Naive thymus-derived CD4-positive, alpha-beta T cell (primary cell): ENCODE measurements at regions of chr4 and their contacts with region 1.

Region 1: DNA sequence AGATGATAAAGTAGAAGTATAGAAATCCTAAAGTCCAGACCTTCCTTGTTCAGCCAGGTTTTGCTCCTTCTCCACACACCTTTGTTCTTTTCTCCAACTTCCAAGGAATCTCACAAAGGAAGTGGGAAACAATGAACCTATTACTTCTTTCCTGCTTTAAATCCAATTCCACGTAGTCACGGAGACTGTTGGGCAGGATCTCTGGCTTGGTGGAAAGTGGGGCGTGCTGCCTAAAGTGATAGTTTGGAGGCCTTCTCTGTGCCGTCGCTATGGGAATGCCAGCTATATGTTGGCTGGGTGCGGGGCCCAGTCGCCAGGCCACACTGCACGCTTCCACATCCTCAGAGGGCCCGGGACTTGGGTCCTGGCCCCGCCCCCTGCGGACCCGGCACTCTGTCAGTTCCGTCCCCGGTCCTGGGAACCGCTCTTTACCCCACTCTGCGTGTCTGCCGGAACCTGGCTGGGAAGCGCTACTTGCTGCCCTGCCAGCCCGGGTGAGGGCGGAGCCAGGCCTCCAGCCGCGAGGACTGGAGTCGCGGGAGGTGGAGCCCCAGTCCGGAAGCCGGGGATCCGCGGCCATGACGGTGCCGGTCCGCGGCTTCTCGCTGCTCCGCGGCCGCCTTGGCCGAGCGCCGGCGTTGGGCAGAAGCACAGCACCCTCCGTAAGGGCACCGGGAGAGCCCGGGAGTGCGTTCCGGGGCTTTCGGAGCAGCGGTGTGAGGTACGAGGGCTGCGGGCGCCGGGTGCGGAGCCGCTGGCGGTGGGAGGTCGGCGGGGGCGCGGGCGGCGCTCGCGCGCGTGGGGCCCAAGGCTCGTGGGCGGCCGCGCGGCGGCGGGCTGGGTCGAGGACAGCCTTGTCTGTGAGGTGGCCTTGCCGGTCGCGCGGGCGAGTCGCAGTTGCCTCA is at the start of gene MTHFD2L:
- DNase-seq: peak; percentile 68 to 88 (median 75)
- ATAC-seq: peak; percentile 97
- H3K4me3 ChIP-seq: peak within 1 kb of the TSS; percentile 68
- H3K4me3 Mint-ChIP-seq: peak within 1 kb of the TSS; percentile 86 to 95 (median 90)
- H3K27ac ChIP-seq: peak within 1 kb of the TSS; percentile 78
- H3K27ac Mint-ChIP-seq: peak within 1 kb of the TSS; percentile 62 to 96 (median 90)
- H3K4me1 ChIP-seq: peaks cover 6 to 9% of the 10 kb centered on the region in 2 donors
- H3K4me1 Mint-ChIP-seq: peaks cover 10 to 48% (median 26%) of the 10 kb centered on the region in 7 donors
- H3K27me3 ChIP-seq: no peaks in the 10 kb centered on the region
- H3K27me3 Mint-ChIP-seq: peaks cover 0 to 30% (median 0%) of the 10 kb centered on the region in 5 donors
- total RNA-seq, gene MTHFD2L: 7.5 to 13.7 (median 10.4) TPM

Region 2: GRCh38 chr4:73069338-73070073 is 1088.3 kb before region 1 on chr4 and contains the start of gene COX18:
- CTCF ChIA-PET with region 1: no interaction called
- POLR2A ChIA-PET with region 1: no interaction called
- intact Hi-C with region 1: loop called (anchors 1 to 5 kb)
- DNase-seq: peak; percentile 90 to 93 (median 91)
- ATAC-seq: peak; percentile 87
- H3K4me3 ChIP-seq: peak within 1 kb of the TSS; percentile 79
- H3K4me3 Mint-ChIP-seq: peak within 1 kb of the TSS; percentile 86 to 97 (median 90)
- H3K27ac ChIP-seq: peak within 1 kb of the TSS; percentile 98
- H3K27ac Mint-ChIP-seq: peak within 1 kb of the TSS; percentile 93 to 99 (median 98)
- H3K4me1 ChIP-seq: peaks cover 25 to 29% of the 10 kb centered on the region in 2 donors
- H3K4me1 Mint-ChIP-seq: peaks cover 24 to 46% (median 39%) of the 10 kb centered on the region in 7 donors
- H3K27me3 ChIP-seq: no peaks in the 10 kb centered on the region
- H3K27me3 Mint-ChIP-seq: no peaks in the 10 kb centered on the region
- total RNA-seq, gene COX18: 11.1 to 18.4 (median 14.0) TPM

Region 3: GRCh38 chr4:74397748-74398426 is 240.1 kb after region 1 on chr4:
- CTCF ChIA-PET with region 1: no interaction called
- POLR2A ChIA-PET with region 1: interaction called, 5 read pairs
- intact Hi-C with region 1: loop called in 1 of 2 experiments (anchors 1 kb)
- DNase-seq: peak in 4 of 9 donors; percentile 10 to 58 (median 38)
- ATAC-seq: peak; percentile 78
- H3K4me3 ChIP-seq: peak overlapping the region; percentile 76
- H3K4me3 Mint-ChIP-seq: peak overlapping the region; percentile 89 to 99 (median 96)
- H3K27ac ChIP-seq: peak overlapping the region; percentile 83
- H3K27ac Mint-ChIP-seq: peak overlapping the region; percentile 92 to 99 (median 97)
- H3K4me1 ChIP-seq: no peaks in the 10 kb centered on the region
- H3K4me1 Mint-ChIP-seq: peaks cover 0 to 19% (median 11%) of the 10 kb centered on the region in 7 donors
- H3K27me3 ChIP-seq: no peaks in the 10 kb centered on the region
- H3K27me3 Mint-ChIP-seq: peaks cover 0 to 5% (median 0%) of the 10 kb centered on the region in 5 donors

Region 4: GRCh38 chr4:76148142-76148865 is 1990.5 kb after region 1 on chr4 and contains the start of gene NUP54:
- CTCF ChIA-PET with region 1: no interaction called
- POLR2A ChIA-PET with region 1: no interaction called
- intact Hi-C with region 1: loop called in 1 of 2 experiments (anchors 5 kb)
- DNase-seq: peak; percentile 85 to 96 (median 92)
- ATAC-seq: peak; percentile 99
- H3K4me3 ChIP-seq: peak within 1 kb of the TSS; percentile 85
- H3K4me3 Mint-ChIP-seq: peak within 1 kb of the TSS; percentile 90 to 100 (median 96)
- H3K27ac ChIP-seq: peak within 1 kb of the TSS; percentile 93
- H3K27ac Mint-ChIP-seq: peak within 1 kb of the TSS; percentile 91 to 99 (median 94)
- H3K4me1 ChIP-seq: peaks cover 12% of the 10 kb centered on the region in 2 donors
- H3K4me1 Mint-ChIP-seq: peaks cover 21 to 52% (median 45%) of the 10 kb centered on the region in 7 donors
- H3K27me3 ChIP-seq: no peaks in the 10 kb centered on the region
- H3K27me3 Mint-ChIP-seq: no peaks in the 10 kb centered on the region
- total RNA-seq, gene NUP54: 51.1 to 82.0 (median 65.5) TPM